Aorta (tissue), 5 donors: ENCODE measurements at regions of chr2 and their contacts with region 1.

Region 1: DNA sequence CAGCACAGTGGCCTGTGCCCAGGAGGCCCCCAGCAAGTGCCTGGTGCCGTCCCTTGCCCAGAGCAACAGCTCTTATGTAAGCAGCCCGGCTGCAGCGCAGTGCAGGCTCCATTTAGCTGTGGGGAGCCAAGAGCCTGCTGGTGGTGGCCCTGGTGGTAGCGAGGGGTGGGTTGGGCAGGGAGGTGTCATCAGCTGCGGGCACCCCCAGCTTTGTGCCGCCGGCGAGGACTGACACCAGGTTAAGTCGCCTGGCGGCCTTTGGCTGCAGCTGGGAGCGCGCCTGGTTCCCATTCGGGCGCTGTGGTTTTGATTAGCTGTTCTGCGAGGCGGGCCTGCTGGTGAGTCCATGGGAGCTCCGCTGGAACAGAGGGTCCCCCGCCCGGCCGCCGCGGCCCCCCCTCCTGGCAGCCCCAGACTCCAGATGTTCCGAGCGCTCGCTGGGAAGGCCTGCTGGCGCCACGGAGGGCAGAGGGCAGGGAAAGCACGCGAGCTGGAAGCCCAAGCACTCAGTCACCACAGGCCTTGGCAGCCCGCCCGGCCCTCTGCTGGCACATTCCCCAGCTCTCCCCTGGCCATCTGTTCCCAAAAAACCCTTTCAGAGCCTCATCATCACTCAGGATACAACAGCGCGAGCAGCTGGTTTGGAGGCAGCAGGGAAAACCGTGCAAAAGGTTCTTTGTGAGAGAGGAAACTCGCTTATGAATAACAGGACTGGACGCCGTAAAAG is 18.4 kb downstream of the ATOH8 start:
- DNase-seq: peak; percentile 98 to 100
- ATAC-seq: peak; percentile 95
- H3K4me3 ChIP-seq: no peak overlapping the region
- H3K27ac ChIP-seq: peak overlapping the region in 1 of 2 donors; percentile 86
- H3K4me1 ChIP-seq: peaks cover 9 to 13% of the 10 kb centered on the region in 2 donors
- H3K27me3 ChIP-seq: no peaks in the 10 kb centered on the region

Region 2: DNA sequence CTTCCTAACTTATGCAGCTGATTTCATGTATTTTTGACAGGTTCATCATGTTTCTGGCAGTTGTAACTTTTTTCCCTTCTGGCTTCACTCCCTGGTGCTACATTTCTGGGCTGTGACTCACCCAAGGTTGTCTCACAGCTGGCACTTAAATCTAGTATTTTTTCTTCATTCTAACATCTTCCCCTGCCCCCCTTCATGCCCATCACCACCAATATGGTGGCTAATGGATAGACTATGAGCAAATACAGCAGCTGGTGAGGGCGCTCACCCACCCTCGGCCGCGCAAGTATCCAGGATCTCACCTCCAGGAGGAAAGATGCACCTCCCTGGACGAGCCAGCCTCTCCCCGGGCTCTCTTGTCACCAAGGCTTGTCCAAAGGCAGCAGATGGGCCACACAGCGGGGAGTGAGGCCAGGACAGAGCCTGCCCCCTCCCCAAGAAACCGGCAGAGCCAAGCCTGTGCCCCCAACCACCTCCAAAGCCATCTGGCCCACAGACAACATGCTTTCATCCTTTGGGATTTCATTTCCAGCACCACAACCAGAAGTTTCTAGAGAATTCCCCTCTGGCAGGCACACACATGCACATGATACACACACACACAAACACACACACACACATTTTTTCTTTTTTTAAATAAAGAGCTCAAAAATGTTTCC is 20.7 kb after region 1 on chr2:
- intact Hi-C with region 1: loop called in 1 of 2 experiments (anchors 2 kb)
- DNase-seq: peak; percentile 53 to 81
- ATAC-seq: peak; percentile 42
- H3K4me3 ChIP-seq: no peak overlapping the region
- H3K27ac ChIP-seq: peak overlapping the region; percentile 4 to 99
- H3K4me1 ChIP-seq: peaks cover 0 to 3% of the 10 kb centered on the region in 2 donors
- H3K27me3 ChIP-seq: no peaks in the 10 kb centered on the region